ENCODE measurements at regions of chr2 and their contacts with region 1.

Region 1: GRCh38 chr2:230668184-230668938 is 44.3 kb upstream of the CAB39 start:
- DNase-seq: peak; percentile 77
- H3K4me3 Mint-ChIP-seq: peak overlapping the region; percentile 73
- H3K27ac Mint-ChIP-seq: peak overlapping the region; percentile 96
- H3K4me1 Mint-ChIP-seq: peaks cover 69% of the 10 kb centered on the region
- H3K27me3 Mint-ChIP-seq: no peaks in the 10 kb centered on the region

Region 2: GRCh38 chr2:230485801-230486341 is 182.5 kb before region 1 on chr2:
- intact Hi-C with region 1: no loop called
- DNase-seq: no peak
- H3K4me3 Mint-ChIP-seq: no peak overlapping the region
- H3K27ac Mint-ChIP-seq: no peak overlapping the region
- H3K4me1 Mint-ChIP-seq: peaks cover 11% of the 10 kb centered on the region
- H3K27me3 Mint-ChIP-seq: no peaks in the 10 kb centered on the region

Region 3: DNA sequence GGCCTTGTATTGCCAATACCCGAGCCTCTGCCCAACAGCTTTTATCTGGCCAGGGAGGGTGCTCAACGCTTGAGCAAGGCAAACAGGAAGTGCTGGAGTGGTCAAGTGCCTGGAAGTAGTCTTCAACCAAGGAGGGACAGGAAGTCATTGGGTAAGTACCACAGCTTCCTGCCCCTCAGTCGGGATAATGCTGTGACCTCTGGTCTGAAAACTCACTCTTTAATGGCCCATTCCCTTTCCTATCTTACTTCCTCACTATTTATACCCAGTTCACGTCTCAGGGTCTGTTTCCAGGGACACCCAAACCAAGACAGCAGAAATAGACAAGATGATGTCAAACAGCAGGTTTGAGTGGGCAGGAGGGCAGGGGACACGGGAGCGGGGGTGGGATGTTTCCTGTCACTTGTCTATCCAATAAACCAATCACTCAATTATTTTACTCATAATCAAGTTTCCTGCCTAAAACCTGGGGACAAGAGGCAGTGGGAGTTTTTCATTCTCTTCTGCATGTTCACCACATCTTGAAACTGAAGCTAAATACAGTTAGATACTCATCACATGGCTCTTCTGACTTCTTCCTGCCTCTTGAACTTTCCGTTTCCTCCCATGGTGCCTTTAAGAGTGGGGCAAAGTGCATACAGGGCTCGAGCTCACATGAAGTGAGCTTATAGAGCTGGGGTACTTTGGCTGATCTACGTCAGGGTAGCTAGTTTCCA is 24.6 kb before region 1 on chr2:
- intact Hi-C with region 1: loop called (anchors 1 kb)
- DNase-seq: peak; percentile 87
- H3K4me3 Mint-ChIP-seq: peak overlapping the region; percentile 28
- H3K27ac Mint-ChIP-seq: peak overlapping the region; percentile 90
- H3K4me1 Mint-ChIP-seq: peaks cover 24% of the 10 kb centered on the region
- H3K27me3 Mint-ChIP-seq: no peaks in the 10 kb centered on the region

Region 4: GRCh38 chr2:230678451-230678850 is 10.1 kb after region 1 on chr2:
- intact Hi-C with region 1: loop called (anchors 1 kb)
- DNase-seq: peak; percentile 69
- H3K4me3 Mint-ChIP-seq: peak overlapping the region; percentile 10
- H3K27ac Mint-ChIP-seq: peak overlapping the region; percentile 83
- H3K4me1 Mint-ChIP-seq: peaks cover 46% of the 10 kb centered on the region
- H3K27me3 Mint-ChIP-seq: no peaks in the 10 kb centered on the region

Measured in activated CD4-positive, alpha-beta T cell treated with anti-CD3 and anti-CD28 coated beads, Interleukin-2, amount 10 ng/mL, durations not matched to agents 24 days and 14 days (primary cell).